Head of caudate nucleus (tissue), 42 donors: ENCODE measurements at regions of chr14 and their contacts with region 1.

Region 1: DNA sequence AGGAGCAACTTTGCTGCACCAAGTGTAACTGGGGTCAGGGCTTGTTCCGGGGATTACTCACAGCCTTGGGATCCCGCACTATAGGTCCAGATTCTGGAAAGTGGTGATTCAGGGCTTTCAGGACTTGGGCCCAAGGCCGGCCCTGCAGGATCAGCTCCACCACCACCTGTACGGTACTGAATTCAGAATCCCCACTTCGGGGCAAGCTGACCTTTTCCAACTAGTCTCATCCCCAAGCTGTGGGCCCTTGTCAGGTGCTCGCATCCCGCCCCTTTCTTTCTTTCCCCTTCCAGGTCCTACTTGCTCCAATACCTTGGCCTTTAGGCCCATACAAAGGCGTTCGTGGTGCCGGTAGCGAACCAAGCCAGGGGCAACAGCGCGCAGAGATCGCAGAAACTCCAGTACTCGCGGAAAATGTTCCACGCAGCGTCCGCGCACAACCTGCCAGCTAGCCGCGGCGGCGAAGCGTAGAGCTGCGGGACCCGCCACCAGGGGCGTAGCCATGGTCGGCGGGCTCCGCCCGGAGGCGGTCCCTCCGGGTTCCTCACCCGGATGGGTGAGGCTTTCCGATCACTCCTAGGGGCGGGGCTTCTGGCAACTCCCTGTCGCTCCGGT is 487 bp downstream of the TINF2 start:
- DNase-seq: peak in 41 of 42 donors; percentile 81 to 97 (median 93)

Region 2: GRCh38 chr14:24259252-24259995 is 17.5 kb after region 1 on chr14:
- intact Hi-C with region 1: no loop called
- DNase-seq: no peak

Region 3: GRCh38 chr14:24299255-24300195 is 57.6 kb after region 1 on chr14 and contains the starts of genes DHRS1 and NOP9:
- intact Hi-C with region 1: loop called (anchors 5 kb)
- DNase-seq: peak; percentile 85 to 97 (median 94)

Region 4: DNA sequence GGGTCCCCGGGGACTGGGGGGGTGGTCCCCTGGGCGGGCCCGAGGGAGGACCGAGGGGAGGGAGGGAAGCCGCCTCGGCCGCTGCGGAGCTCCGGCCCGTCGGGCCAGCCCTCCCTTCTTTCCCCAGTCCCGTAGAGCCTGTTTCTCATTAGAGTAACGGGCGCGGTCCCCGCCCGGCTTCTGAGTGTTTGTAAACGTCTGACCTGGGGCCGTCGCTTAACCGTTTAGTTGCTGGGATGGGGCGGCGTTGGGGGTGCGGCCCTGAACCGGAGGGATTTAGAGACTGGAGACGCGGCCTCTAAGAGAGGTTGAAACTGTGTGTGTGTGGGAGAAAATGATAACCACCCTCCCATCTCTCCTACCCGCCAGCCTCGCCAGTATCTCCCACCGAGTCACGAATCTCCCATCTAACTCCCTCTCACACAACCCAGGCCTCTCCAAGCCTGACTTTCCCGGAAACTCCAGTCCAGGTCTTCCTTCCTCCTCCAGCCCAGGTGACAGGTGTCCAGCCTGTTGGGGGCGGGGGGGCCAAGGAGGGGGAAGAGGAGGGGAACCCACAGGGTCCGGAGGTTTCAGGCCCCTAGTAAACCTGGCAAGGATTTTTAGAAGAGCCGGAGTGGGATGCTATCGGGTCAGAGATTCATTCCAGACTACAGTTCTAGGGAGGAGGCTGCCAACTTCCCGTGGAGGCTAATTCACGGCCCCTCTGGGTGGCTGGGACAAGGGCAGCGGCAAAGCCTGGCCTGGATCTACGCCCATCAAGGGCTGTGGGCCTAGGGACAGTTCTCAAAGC is 125.0 kb after region 1 on chr14:
- intact Hi-C with region 1: no loop called
- DNase-seq: peak in 38 of 42 donors; percentile 6 to 76 (median 46)

Region 5: DNA sequence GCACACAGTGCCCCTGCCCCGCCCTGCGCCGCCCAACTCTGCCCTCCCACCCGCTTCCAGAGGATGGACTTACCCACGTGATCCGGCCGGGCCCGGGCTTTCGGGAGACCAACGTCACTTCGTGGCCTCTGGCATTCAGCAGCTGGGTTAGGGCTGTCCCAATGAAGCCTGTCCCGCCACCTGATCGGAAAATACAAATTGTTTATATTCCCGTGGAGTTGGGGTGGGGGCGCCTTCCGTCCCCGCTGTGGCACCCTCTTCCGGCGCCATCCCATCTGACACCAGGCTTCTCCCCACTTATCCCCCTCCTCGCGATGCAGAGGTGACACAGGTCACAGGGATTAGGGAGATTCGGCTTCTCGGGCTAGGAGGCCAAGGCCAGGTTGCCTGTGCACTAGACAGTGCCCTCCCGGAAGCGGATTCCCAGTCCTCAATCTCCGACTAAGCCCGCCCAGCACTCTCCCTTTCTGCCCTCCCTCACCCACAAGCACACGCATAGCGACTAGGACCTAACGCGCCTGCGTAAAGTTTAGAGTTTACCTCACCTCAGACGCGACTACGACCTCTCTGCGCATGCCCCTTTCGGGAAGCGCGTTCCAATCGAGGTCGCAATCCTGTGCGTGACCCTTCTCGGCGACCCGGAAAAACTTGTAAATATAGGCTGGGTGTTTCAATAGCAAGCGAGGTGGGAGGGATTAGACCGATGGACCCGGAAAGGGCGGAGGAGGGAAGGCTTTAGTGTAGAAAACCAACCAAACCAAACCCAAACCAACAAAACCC is 200.5 kb after region 1 on chr14 and contains the start of gene SDR39U1:
- intact Hi-C with region 1: loop called (anchors 5 kb)
- DNase-seq: peak; percentile 93 to 99 (median 97)